ENCODE measurements at regions of chr1 and their contacts with region 1.

Region 1: DNA sequence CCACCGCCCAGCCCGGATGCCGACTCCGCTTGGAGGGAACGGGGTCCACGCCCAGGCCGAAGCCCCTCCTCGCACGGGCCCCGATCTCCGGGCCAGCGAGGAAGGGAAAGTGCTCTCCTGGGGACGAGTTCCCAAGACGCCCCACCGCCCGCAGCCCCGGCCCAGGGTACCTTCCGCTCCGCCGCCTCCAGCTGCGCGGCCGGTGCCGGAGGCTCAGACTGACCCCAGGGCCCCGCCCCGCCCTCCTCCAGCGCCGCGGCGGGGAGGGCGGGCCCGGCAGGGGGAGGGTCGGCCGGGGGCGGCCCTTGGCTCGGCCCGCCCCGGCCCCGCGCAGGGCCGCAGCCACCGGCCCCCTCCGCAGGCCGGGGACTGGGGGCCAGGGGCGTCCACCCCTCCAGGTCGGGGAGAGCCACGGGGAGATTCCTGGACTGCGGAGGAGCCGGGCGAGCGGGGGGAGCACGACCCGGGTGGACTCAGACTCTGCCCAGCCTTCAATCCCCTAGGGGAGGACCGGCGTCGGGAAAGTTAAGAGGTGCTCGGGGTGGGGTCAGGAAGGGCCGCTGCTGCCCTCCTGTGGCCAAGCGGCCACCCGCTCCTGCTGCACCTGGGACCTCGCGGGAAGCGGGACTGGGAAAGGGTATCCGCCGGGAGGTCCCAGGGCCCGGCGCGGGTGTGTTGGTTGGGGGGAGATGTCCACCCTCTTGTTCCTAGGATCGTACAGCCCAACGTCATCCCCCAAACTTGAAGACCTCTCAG is at the start of gene RHOC:
- DNase-seq: peak; percentile 94
- H3K4me3 ChIP-seq: peak within 1 kb of the TSS; percentile 41 to 92 (median 72)
- H3K27ac ChIP-seq: peak within 1 kb of the TSS; percentile 76 to 97 (median 94)
- H3K4me1 ChIP-seq: peaks cover 34 to 59% (median 53%) of the 10 kb centered on the region in 6 donors
- H3K27me3 ChIP-seq: peaks cover 0 to 5% (median 0%) of the 10 kb centered on the region in 7 donors
- CTCF ChIP-seq: peak; percentile 68 to 94 (median 91)
- POLR2A ChIP-seq: peak in 1 of 3 donors; percentile 69
- total RNA-seq, gene RHOC: 125 to 292 (median 210) TPM

Region 2: DNA sequence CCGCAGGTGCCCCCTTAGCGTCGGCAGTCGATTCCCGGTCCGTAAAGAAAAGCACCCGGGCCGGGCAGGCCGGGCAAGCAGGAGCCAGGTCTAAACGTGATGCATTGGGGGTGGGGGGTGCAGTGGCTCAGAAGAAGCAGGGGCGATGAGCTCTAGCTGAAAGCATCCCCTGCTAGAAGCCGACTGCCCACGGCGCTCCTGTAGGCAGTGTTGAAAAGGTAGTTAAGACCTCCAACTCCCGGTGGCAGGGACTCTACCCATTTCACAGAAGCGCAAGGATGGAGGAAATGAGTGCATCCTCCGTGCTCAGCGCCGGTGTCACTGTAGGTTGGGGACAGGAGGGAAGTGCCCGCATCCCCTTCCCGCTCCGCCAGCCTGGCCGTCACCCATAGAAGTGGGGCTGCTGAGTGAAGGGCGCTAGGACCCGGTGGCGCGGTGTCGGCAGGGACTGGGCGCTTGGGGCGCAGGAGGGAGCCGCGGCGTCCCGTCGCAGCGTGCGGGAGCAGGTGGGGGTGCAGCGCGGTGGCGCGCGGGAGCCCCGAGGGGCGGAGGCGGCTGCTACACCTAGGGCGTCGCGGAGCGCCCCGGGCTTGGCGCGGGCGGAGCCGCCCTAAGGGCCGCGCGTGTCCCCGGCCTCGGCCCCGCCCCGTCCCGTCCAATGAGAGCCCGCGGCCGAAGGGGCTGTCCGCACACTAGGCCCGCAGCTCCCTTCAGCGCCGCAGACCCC is 198.6 kb before region 1 on chr1 and contains the start of gene WNT2B:
- intact Hi-C with region 1: loop called (anchors 5 kb)
- DNase-seq: peak; percentile 85
- H3K4me3 ChIP-seq: peak within 1 kb of the TSS; percentile 50 to 74 (median 58)
- H3K27ac ChIP-seq: no peak within 1 kb of the TSS
- H3K4me1 ChIP-seq: peaks cover 7 to 26% (median 20%) of the 10 kb centered on the region in 6 donors
- H3K27me3 ChIP-seq: peaks cover 0 to 70% (median 32%) of the 10 kb centered on the region in 7 donors
- CTCF ChIP-seq: no peak
- POLR2A ChIP-seq: no peak
- total RNA-seq, gene WNT2B: 0.97 to 5.8 (median 1.9) TPM

Region 3: DNA sequence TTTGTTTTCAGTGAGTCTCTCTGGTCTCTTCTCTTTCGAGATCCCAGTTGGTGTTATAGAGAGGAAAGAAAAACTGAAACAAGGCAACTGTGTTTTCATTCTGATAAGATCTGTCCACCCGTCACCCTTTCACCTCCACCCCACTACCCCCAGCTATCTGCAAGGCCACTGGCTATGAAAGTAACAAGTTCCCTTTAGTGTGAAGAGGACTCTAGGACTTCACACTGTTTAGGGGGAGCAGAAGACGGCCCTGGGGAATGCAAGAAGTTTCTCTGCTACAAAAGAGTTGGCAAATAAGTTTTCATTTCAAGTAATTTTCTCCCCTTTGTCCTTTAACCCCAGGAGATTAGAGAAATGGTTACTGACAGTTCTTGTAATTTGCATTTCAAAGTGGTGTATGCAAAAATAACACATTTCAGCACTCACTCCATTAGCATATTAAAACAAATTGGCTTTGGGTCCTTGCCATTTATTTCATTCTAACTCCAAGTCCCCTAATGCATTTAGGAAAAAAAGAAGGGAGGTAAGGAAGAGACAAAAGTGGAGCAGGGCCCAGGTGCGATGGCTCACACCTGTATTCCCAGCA is 87.7 kb after region 1 on chr1:
- intact Hi-C with region 1: no loop called
- DNase-seq: no peak
- H3K4me3 ChIP-seq: no peak overlapping the region
- H3K27ac ChIP-seq: no peak overlapping the region
- H3K4me1 ChIP-seq: no peaks in the 10 kb centered on the region
- H3K27me3 ChIP-seq: no peaks in the 10 kb centered on the region
- CTCF ChIP-seq: no peak
- POLR2A ChIP-seq: no peak